ENCODE measurements at regions of chr6 and their contacts with region 1.

Region 1: GRCh38 chr6:136262940-136263339 is 12.8 kb upstream of the MTFR2 start:
- DNase-seq: no peak
- H3K4me3 ChIP-seq: no peak overlapping the region
- H3K27ac ChIP-seq: no peak overlapping the region
- H3K4me1 ChIP-seq: peaks cover 0 to 15% of the 10 kb centered on the region in 2 donors
- H3K27me3 ChIP-seq: no peaks in the 10 kb centered on the region
- CTCF ChIP-seq: no peak
- POLR2A ChIP-seq: no peak

Region 2: DNA sequence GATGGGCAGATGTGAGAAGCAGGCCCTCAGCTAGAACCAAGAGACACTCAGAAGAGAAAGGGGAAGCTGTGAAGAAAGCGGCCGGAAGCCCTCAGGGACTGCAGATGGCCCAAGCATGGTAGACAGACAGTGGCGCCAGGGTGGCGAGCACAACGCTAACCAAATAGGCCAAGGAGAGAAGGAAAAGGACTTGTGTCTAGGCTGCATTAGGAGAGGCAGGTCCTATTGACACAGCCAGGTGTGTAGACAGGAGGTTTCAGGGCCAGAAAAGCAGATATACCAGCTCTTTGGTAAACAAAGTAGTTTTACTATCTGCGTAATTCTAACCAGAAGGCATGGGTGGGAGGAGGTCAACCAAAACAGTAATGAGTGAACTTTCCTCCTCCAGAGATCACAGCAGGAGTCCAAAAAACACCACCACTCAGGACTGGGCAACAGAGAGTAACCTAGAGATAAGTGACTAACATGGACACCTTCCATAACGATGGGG is 303.1 kb after region 1 on chr6:
- intact Hi-C with region 1: loop called in 1 of 2 experiments (anchors 10 kb)
- DNase-seq: no peak
- H3K4me3 ChIP-seq: no peak overlapping the region
- H3K27ac ChIP-seq: no peak overlapping the region
- H3K4me1 ChIP-seq: peaks cover 10 to 42% of the 10 kb centered on the region in 2 donors
- H3K27me3 ChIP-seq: no peaks in the 10 kb centered on the region
- CTCF ChIP-seq: no peak
- POLR2A ChIP-seq: no peak